ENCODE measurements at regions of chr18 and their contacts with region 1.

Region 1: DNA sequence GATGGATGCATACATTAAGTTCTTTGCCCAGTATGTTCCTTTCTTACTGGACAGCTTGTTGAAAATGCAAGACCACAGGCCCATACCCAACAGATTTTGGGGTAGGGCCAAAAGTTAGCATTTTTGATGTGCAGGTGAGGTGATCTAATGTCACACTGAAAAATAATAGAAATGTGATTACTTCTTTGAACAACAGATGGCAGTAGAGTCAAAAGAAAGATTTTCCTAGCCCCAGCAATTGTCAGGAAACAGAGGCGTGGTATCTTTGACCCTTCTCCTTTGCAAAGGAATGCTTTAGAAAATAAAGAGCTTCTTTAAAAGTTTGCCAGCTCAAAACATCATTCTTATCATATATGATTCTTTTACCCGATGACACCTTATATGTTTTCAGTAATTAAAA is 343.6 kb upstream of the SYT4 start:
- DNase-seq: no peak
- ATAC-seq: no peak
- H3K4me3 ChIP-seq: no peak overlapping the region
- H3K27ac ChIP-seq: no peak overlapping the region
- H3K4me1 ChIP-seq: no peaks in the 10 kb centered on the region
- H3K27me3 ChIP-seq: no peaks in the 10 kb centered on the region
- CTCF ChIP-seq: peak; percentile 35; the same call in 1 of the 2 replicates

Region 2: GRCh38 chr18:43757273-43757672 is 136.3 kb after region 1 on chr18:
- CTCF ChIA-PET with region 1: no interaction called
- POLR2A ChIA-PET with region 1: no interaction called
- in situ Hi-C with region 1: no loop called
- intact Hi-C with region 1: no loop called
- DNase-seq: no peak
- ATAC-seq: no peak
- H3K4me3 ChIP-seq: no peak overlapping the region
- H3K27ac ChIP-seq: no peak overlapping the region
- H3K4me1 ChIP-seq: no peaks in the 10 kb centered on the region
- H3K27me3 ChIP-seq: no peaks in the 10 kb centered on the region
- CTCF ChIP-seq: no peak

Region 3: DNA sequence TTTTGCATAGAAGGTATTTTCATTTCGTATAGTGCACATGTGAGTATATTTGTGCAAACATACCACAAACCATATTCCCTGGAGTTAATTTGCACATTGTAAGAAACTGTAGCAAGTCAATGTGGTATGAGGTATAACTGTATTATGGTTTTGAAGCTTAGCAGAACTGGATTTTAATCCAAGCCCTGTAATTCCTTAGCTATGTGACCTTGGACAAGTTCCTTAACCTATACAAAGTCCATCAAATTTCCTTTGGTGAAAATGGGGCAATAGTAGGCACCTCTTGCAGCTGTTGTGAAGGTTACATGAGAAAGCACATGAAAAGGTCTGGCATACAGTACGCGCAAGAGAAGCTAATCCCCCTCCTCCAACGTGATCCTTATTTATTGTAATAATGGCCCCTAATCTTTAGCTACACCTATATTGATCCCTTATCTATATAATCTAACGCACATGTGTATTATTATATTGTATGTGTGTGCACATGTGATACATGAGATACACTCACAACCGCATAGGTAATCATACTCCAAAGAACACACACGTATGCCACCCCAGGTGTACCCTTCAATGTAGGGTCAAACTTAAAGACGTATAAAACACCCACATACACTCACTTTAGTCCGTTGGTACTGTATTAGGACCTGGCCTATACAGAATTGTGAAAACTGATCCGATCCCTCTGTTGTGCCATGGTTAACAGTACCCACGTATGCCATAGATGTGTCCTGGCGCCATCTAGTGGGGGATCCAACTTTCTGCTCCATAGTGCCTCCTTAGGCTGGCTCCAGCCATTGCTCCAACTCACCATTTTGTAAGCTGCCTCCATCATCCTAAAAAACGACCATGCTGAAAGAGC is 1591.5 kb after region 1 on chr18:
- CTCF ChIA-PET with region 1: no interaction called
- POLR2A ChIA-PET with region 1: no interaction called
- in situ Hi-C with region 1: no loop called
- intact Hi-C with region 1: loop called (anchors 10 kb)
- DNase-seq: peak; percentile 75
- ATAC-seq: peak; percentile 84
- H3K4me3 ChIP-seq: no peak overlapping the region
- H3K27ac ChIP-seq: no peak overlapping the region
- H3K4me1 ChIP-seq: no peaks in the 10 kb centered on the region
- H3K27me3 ChIP-seq: no peaks in the 10 kb centered on the region
- CTCF ChIP-seq: peak; percentile 69